ENCODE measurements at regions of chr19 and their contacts with region 1.

Region 1: GRCh38 chr19:41263850-41264580 is at the start of gene HNRNPUL1:
- DNase-seq: peak; percentile 98 to 99
- H3K4me3 ChIP-seq: peak within 1 kb of the TSS; percentile 97
- H3K4me1 ChIP-seq: peaks cover 13% of the 10 kb centered on the region
- H3K27me3 ChIP-seq: no peaks in the 10 kb centered on the region

Region 2: GRCh38 chr19:40974633-40975037 is 289.4 kb before region 1 on chr19:
- in situ Hi-C with region 1: loop called (anchors 10 kb)
- DNase-seq: peak; percentile 63 to 83
- H3K4me3 ChIP-seq: no peak overlapping the region
- H3K4me1 ChIP-seq: no peaks in the 10 kb centered on the region
- H3K27me3 ChIP-seq: no peaks in the 10 kb centered on the region

Region 3: DNA sequence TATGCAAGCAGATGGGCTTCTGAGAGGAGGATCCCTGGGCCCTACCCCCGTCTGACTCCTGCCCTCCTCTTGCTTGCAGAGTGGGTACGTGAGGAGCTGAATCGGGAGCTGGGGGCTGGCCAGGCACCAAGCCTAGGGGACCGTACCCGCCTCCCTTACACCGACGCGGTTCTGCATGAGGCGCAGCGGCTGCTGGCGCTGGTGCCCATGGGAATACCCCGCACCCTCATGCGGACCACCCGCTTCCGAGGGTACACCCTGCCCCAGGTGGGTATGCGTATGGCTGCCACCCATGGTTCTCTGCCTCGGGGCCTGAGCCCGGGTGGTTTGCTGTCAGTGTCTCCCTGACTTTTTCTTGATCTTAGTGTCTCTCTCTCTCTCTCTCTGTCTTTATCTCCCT is 60.6 kb before region 1 on chr19:
- in situ Hi-C with region 1: loop called (anchors 5 kb)
- DNase-seq: no peak
- H3K4me3 ChIP-seq: no peak overlapping the region
- H3K4me1 ChIP-seq: no peaks in the 10 kb centered on the region
- H3K27me3 ChIP-seq: no peaks in the 10 kb centered on the region